MCF 10A (cell line): ENCODE measurements at regions of chr2 and their contacts with region 1.

Region 1: DNA sequence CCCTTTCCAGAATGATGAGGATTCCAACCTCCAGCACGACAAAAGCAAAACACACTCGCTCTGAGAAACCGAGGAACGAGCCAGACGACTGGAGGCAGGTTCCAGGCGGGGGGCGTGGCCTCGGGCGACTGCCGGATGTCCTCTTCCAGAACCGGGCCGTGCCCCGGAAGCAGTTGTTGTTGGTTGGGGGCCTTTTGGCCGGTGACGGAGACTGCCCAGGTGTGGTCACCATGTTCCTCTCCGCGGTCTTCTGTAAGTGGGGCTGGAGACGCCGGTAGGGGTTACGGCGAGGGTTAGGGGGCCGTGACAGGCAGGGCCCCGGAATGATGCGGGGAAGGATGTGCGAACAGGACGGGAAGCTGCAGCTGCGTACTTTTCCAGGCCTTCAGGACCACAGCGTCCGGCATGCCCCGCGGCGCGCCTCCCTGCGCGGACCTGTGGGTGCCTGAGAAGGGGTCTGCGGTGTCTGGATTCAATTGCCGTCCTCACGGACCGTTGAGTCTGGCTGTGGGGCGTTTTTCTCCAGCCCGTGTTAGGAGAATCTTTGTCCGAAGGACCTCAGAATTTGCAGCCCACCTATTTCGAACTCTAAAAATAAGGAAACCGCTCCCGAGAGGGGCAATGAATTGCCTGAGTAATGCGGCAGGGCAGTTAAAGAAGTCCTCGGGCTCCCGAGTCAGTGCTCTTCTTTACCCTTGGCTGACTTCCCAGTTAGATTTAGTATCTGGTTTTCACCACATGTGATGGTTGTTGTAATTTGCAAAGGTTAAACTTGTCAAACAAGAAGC is at the start of gene MRPL33:
- DNase-seq: peak; percentile 88
- H3K4me3 Mint-ChIP-seq: peak within 1 kb of the TSS; percentile 98
- H3K27ac Mint-ChIP-seq: peak within 1 kb of the TSS; percentile 95
- H3K4me1 Mint-ChIP-seq: peaks cover 40% of the 10 kb centered on the region
- H3K27me3 Mint-ChIP-seq: no peaks in the 10 kb centered on the region
- CTCF ChIP-seq: no peak
- total RNA-seq, gene MRPL33: 204 and 233 TPM in 2 replicates

Region 2: GRCh38 chr2:27754138-27754588 is 17.6 kb before region 1 on chr2:
- CTCF ChIA-PET with region 1: interaction called, 4 read pairs
- POLR2A ChIA-PET with region 1: interaction called, 12 read pairs
- intact Hi-C with region 1: no loop called
- DNase-seq: peak; percentile 82
- H3K4me3 Mint-ChIP-seq: peak overlapping the region; percentile 31
- H3K27ac Mint-ChIP-seq: no peak overlapping the region
- H3K4me1 Mint-ChIP-seq: peaks cover 42% of the 10 kb centered on the region
- H3K27me3 Mint-ChIP-seq: no peaks in the 10 kb centered on the region
- CTCF ChIP-seq: peak; percentile 95

Region 3: DNA sequence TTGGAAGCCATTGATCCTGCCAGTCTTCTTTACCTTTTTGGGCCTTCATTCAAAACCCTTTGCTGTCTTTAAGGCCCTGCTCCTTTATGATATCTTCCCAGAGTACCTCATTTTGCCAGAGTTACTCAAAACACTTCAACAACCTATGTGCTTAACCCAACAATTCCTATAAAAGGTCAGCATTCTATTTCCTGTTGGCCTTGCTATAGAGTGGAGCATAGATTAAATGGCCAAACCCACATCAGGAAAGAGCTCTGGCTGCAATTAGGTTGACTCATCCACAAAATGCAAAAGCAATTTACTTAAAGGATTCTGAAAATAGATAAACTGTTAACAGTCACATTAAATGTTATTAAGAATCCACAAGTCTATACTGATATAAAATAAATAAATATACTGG is 21.0 kb after region 1 on chr2:
- CTCF ChIA-PET with region 1: no interaction called
- POLR2A ChIA-PET with region 1: interaction called, 10 read pairs
- intact Hi-C with region 1: no loop called
- DNase-seq: no peak
- H3K4me3 Mint-ChIP-seq: no peak overlapping the region
- H3K27ac Mint-ChIP-seq: peak overlapping the region; percentile 16
- H3K4me1 Mint-ChIP-seq: peaks cover 30% of the 10 kb centered on the region
- H3K27me3 Mint-ChIP-seq: no peaks in the 10 kb centered on the region
- CTCF ChIP-seq: no peak

Region 4: GRCh38 chr2:27798948-27799645 is 27.4 kb after region 1 on chr2:
- CTCF ChIA-PET with region 1: no interaction called
- POLR2A ChIA-PET with region 1: interaction called, 13 read pairs
- intact Hi-C with region 1: loop called (anchors 1 kb)
- DNase-seq: peak; percentile 98
- H3K4me3 Mint-ChIP-seq: no peak overlapping the region
- H3K27ac Mint-ChIP-seq: peak overlapping the region; percentile 68
- H3K4me1 Mint-ChIP-seq: peaks cover 59% of the 10 kb centered on the region
- H3K27me3 Mint-ChIP-seq: no peaks in the 10 kb centered on the region
- CTCF ChIP-seq: no peak

Region 5: DNA sequence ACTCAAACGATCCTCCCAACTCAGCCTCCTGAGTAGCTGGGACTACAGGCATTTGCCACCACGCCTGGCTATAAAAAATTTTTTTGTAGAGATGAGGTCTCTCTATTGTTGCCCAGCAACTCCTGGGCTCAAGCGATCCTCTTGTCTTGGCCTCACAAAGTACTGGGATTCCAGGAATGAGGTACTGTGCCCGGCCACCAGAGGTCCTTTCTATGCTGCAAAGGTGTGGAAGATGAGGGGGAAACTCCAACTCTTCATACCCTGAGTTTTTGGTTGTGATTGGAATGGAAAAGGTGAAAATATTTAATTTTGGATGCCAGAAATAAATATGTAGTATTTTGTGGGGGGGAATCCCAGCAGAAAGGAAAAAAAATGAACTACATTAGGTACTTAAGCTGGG is 35.7 kb after region 1 on chr2:
- CTCF ChIA-PET with region 1: interaction called, 3 read pairs
- POLR2A ChIA-PET with region 1: interaction called, 20 read pairs
- intact Hi-C with region 1: no loop called
- DNase-seq: peak; percentile 55
- H3K4me3 Mint-ChIP-seq: no peak overlapping the region
- H3K27ac Mint-ChIP-seq: no peak overlapping the region
- H3K4me1 Mint-ChIP-seq: peaks cover 39% of the 10 kb centered on the region
- H3K27me3 Mint-ChIP-seq: no peaks in the 10 kb centered on the region
- CTCF ChIP-seq: peak; percentile 47